Prostate gland (tissue), 2 donors: ENCODE measurements at regions of chr1 and their contacts with region 1.

Region 1: GRCh38 chr1:198088360-198089071 is 68.3 kb upstream of the NEK7 start:
- DNase-seq: no peak
- H3K4me3 ChIP-seq: no peak overlapping the region
- H3K27ac ChIP-seq: no peak overlapping the region
- H3K4me1 ChIP-seq: no peaks in the 10 kb centered on the region
- H3K27me3 ChIP-seq: no peaks in the 10 kb centered on the region
- CTCF ChIP-seq: peak in 3 of 4 experiments; percentile 14 to 44 (median 28)
- POLR2A ChIP-seq: no peak

Region 2: GRCh38 chr1:198132060-198132781 is 43.7 kb after region 1 on chr1:
- intact Hi-C with region 1: no loop called
- DNase-seq: no peak
- H3K4me3 ChIP-seq: no peak overlapping the region
- H3K27ac ChIP-seq: no peak overlapping the region
- H3K4me1 ChIP-seq: no peaks in the 10 kb centered on the region
- H3K27me3 ChIP-seq: no peaks in the 10 kb centered on the region
- CTCF ChIP-seq: no peak
- POLR2A ChIP-seq: no peak

Region 3: DNA sequence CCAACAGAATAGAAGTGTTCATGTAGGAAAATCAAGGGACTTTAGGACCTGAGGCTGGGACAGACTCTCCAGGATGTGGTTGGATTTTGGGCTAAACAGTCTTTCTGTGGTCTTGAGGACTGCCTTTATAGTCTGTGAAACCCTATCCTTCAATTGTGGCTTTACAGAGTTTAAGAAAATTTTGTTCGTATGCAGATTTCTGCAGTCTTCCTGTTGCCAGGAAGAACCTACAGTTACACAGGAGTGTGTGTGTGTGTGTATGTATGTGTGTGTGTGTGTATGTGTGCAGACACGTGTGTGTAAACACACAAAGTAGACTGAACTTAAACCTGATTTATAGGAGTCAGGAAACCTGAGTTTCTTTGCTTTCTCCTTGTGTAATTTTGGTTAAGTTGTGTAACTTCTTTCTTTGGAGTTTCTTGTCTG is 91.1 kb after region 1 on chr1:
- intact Hi-C with region 1: no loop called
- DNase-seq: no peak
- H3K4me3 ChIP-seq: no peak overlapping the region
- H3K27ac ChIP-seq: no peak overlapping the region
- H3K4me1 ChIP-seq: no peaks in the 10 kb centered on the region
- H3K27me3 ChIP-seq: no peaks in the 10 kb centered on the region
- CTCF ChIP-seq: no peak
- POLR2A ChIP-seq: no peak

Region 4: GRCh38 chr1:198359024-198359653 is 270.6 kb after region 1 on chr1:
- intact Hi-C with region 1: loop called (anchors 10 kb)
- DNase-seq: no peak
- H3K4me3 ChIP-seq: no peak overlapping the region
- H3K27ac ChIP-seq: no peak overlapping the region
- H3K4me1 ChIP-seq: no peaks in the 10 kb centered on the region
- H3K27me3 ChIP-seq: no peaks in the 10 kb centered on the region
- CTCF ChIP-seq: peak in 3 of 4 experiments; percentile 28 to 35 (median 33)
- POLR2A ChIP-seq: no peak